Heart right ventricle (tissue), 16 donors: ENCODE measurements at regions of chr11 and their contacts with region 1.

Region 1: GRCh38 chr11:87421422-87421821 is 383.7 kb downstream of the TMEM135 start:
- DNase-seq: peak in 1 of 2 donors; percentile 67
- ATAC-seq: peak; percentile 80 to 89 (median 86)
- H3K4me3 ChIP-seq: no peak overlapping the region
- H3K27ac ChIP-seq: peak overlapping the region in 1 of 10 donors; percentile 37
- H3K4me1 ChIP-seq: peaks cover 0 to 22% (median 11%) of the 10 kb centered on the region in 9 donors
- H3K27me3 ChIP-seq: no peaks in the 10 kb centered on the region
- CTCF ChIP-seq: peak; percentile 67 to 89 (median 85)

Region 2: DNA sequence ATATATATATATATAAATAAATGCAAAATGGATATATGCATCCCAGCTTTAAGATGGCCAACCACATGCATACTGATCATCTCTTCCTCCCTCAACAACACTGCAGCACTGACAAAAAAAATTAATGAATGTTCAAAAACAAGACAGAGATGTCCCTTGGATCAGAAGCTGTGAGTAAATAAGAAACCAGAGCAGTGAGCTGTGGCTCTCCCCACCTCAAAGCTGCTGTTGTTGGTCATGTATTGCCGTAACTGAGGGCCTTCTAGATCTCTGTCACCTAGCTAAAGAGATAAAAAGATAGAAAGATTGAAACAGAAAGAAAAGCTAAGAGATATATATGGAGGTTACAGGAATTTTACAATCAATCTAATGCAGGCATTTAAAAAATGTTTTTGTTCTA is 399.2 kb before region 1 on chr11:
- intact Hi-C with region 1: no loop called
- DNase-seq: no peak
- ATAC-seq: no peak
- H3K4me3 ChIP-seq: no peak overlapping the region
- H3K27ac ChIP-seq: no peak overlapping the region
- H3K4me1 ChIP-seq: peaks cover 0 to 23% (median 12%) of the 10 kb centered on the region in 9 donors
- H3K27me3 ChIP-seq: no peaks in the 10 kb centered on the region
- CTCF ChIP-seq: no peak

Region 3: DNA sequence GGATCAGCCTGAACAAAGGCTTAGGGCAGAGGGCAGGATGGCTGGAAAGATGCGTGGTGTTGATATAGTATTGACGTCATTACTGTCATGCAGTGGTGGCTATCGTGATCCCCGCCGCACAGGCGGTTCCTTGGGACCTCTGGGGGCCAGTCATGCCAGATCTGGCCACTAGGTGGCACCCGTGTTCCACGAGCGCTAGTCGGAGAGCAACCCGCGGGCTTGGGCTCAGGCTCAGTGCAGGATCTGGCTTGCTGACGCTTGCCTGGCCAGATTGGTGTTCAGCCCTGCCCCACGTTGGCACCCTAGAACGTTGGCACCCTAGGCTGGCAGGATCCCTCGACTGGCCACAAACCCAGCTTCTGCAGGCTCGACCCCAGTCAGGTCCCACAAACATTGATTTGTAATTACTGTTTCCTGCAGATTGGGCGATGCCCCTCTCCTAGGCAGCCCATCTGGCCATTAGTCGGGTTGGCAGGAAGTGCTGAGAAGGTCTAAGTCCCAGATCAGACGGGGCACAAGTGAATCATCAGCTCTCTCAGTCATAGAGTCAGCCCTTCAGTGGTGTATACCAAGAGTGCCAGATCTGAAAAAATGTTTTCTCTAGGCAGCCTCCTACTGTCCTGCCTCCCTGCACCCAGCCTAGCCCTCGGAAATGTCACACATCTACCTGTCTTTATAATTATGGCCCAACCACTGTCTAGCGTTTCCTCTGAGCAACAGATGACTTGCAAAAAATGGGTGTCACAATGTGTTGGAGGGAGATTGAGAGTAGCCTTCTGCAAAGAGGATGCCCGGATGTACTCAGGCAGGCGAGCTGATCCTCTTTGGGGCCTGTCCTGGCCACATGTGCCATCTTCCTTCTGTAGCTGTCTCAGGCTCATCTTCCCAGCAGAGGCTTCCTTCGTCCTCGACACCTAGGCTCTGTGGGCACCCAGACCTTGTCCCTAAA is 68.4 kb before region 1 on chr11:
- intact Hi-C with region 1: loop called (anchors 1 to 5 kb)
- DNase-seq: peak; percentile 77 to 89
- ATAC-seq: peak; percentile 80 to 96 (median 94)
- H3K4me3 ChIP-seq: no peak overlapping the region
- H3K27ac ChIP-seq: peak overlapping the region in 5 of 10 donors; percentile 7 to 62 (median 31)
- H3K4me1 ChIP-seq: peaks cover 0 to 48% (median 23%) of the 10 kb centered on the region in 9 donors
- H3K27me3 ChIP-seq: no peaks in the 10 kb centered on the region
- CTCF ChIP-seq: peak; percentile 97 to 100 (median 99)

Region 4: DNA sequence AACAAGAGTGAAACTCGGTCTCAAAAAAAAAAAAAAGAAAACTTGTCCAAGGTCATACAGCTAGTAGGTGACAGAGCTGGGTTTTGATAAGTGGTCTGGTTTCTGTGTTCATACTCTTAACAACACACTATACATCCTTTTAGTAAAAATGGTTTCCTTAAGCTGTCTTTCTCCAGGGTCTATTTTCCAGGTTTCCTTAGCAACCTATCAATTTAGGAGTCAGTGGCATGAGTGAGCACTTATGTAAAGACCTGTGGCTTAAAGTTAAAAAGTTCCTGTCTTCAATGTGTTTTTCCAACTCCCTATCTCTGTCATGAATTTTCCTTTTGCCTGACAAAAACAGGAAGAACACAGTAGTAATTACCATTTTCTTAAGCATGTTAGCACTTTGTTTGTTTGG is 96.8 kb after region 1 on chr11:
- intact Hi-C with region 1: no loop called
- DNase-seq: no peak
- ATAC-seq: no peak
- H3K4me3 ChIP-seq: no peak overlapping the region
- H3K27ac ChIP-seq: no peak overlapping the region
- H3K4me1 ChIP-seq: no peaks in the 10 kb centered on the region
- H3K27me3 ChIP-seq: no peaks in the 10 kb centered on the region
- CTCF ChIP-seq: no peak